Left cardiac atrium (tissue), 4 donors: ENCODE measurements at regions of chr7 and their contacts with region 1.

Region 1: DNA sequence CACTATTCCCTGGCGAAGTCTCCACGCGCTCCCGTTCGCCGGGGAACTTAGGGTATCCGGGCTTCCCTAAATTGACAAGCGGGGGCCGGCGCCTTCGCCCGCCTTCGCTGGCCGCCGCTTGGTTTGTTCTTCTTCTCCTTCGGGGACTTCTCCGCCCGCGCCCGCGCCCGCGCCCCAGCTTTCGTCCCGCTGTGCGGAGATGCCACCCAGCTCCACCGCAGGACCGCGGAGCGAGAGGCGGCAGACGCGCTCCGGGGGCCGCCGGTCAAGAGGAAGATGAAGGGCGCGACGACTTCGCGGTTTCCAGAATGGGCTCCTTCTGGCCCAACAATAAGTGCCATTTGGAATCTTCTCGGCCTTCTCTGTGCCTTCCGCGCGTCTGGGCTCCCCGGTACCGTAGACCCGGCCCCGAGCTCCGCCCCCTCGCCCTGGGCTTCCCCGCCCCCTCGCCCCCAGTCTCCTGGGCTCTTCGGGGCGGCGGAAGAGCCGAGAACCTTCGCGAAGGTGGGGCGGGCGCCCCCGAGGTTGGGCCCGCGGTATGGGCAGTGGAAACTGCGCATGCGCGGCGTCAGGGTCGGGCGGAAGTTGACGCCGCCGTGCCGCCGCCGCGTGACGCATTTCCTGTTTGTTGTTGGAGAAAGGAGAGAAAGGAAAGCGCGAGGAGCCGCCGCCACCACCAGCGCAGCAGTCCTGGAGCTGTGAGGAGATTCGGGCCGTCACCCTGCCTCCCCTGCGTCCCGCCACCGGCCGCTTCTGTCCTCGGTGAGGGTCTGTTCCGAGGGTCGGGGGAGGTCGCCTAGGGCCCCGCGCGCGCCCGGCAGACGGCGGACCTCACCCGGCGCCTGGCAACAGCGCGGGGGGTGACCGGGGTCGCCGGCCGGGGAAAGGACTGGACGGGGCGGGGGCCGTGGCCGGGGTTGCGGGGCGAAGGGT is at the start of gene DNAJB6:
- DNase-seq: peak; percentile 96
- ATAC-seq: peak; percentile 92 to 93
- total RNA-seq, gene DNAJB6: 158 to 159 TPM

Region 2: GRCh38 chr7:157386979-157387800 is 50.5 kb after region 1 on chr7:
- intact Hi-C with region 1: loop called in 1 of 2 experiments (anchors 10 kb)
- DNase-seq: peak; percentile 90
- ATAC-seq: peak; percentile 83 to 87